Activated CD8-positive, alpha-beta T cell treated with anti-CD3 and anti-CD28 coated beads for 36 hours (primary cell): ENCODE measurements at regions of chr16 and their contacts with region 1.

Region 1: GRCh38 chr16:81006814-81007696 is at the starts of genes CENPN and CMC2:
- DNase-seq: peak; percentile 99
- ATAC-seq: peak; percentile 86
- H3K4me3 Mint-ChIP-seq: peak within 1 kb of the TSS; percentile 86
- H3K27ac Mint-ChIP-seq: peak within 1 kb of the TSS; percentile 100
- H3K4me1 Mint-ChIP-seq: peaks cover 41% of the 10 kb centered on the region
- H3K27me3 Mint-ChIP-seq: no peaks in the 10 kb centered on the region
- CTCF ChIP-seq: no peak
- total RNA-seq, gene CENPN: 51.7 to 54.8 TPM
- total RNA-seq, gene CMC2: 105 to 106 TPM

Region 2: GRCh38 chr16:80981103-80981502 is 26.0 kb before region 1 on chr16:
- CTCF ChIA-PET with region 1: interaction called, 16 read pairs
- POLR2A ChIA-PET with region 1: no interaction called
- intact Hi-C with region 1: no loop called
- DNase-seq: no peak
- ATAC-seq: no peak
- H3K4me3 Mint-ChIP-seq: no peak overlapping the region
- H3K27ac Mint-ChIP-seq: no peak overlapping the region
- H3K4me1 Mint-ChIP-seq: peaks cover 7% of the 10 kb centered on the region
- H3K27me3 Mint-ChIP-seq: no peaks in the 10 kb centered on the region
- CTCF ChIP-seq: no peak

Region 3: GRCh38 chr16:80989801-80990200 is 17.3 kb before region 1 on chr16:
- CTCF ChIA-PET with region 1: interaction called, 13 read pairs
- POLR2A ChIA-PET with region 1: interaction called, 5 read pairs
- intact Hi-C with region 1: no loop called
- DNase-seq: no peak
- ATAC-seq: no peak
- H3K4me3 Mint-ChIP-seq: no peak overlapping the region
- H3K27ac Mint-ChIP-seq: no peak overlapping the region
- H3K4me1 Mint-ChIP-seq: peaks cover 39% of the 10 kb centered on the region
- H3K27me3 Mint-ChIP-seq: no peaks in the 10 kb centered on the region
- CTCF ChIP-seq: no peak

Region 4: GRCh38 chr16:81077076-81077940 is 70.3 kb after region 1 on chr16 and contains the start of gene C16orf46:
- CTCF ChIA-PET with region 1: interaction called, 19 read pairs
- POLR2A ChIA-PET with region 1: interaction called, 5 read pairs
- intact Hi-C with region 1: loop called (anchors 5 kb)
- DNase-seq: peak; percentile 99
- ATAC-seq: peak; percentile 85
- H3K4me3 Mint-ChIP-seq: no peak within 1 kb of the TSS
- H3K27ac Mint-ChIP-seq: no peak within 1 kb of the TSS
- H3K4me1 Mint-ChIP-seq: peaks cover 3% of the 10 kb centered on the region
- H3K27me3 Mint-ChIP-seq: peaks cover 2% of the 10 kb centered on the region
- CTCF ChIP-seq: no peak
- total RNA-seq, gene C16orf46: 0.59 to 0.60 TPM